Pancreas (tissue), 10 donors: ENCODE measurements at regions of chr11 and their contacts with region 1.

Region 1: DNA sequence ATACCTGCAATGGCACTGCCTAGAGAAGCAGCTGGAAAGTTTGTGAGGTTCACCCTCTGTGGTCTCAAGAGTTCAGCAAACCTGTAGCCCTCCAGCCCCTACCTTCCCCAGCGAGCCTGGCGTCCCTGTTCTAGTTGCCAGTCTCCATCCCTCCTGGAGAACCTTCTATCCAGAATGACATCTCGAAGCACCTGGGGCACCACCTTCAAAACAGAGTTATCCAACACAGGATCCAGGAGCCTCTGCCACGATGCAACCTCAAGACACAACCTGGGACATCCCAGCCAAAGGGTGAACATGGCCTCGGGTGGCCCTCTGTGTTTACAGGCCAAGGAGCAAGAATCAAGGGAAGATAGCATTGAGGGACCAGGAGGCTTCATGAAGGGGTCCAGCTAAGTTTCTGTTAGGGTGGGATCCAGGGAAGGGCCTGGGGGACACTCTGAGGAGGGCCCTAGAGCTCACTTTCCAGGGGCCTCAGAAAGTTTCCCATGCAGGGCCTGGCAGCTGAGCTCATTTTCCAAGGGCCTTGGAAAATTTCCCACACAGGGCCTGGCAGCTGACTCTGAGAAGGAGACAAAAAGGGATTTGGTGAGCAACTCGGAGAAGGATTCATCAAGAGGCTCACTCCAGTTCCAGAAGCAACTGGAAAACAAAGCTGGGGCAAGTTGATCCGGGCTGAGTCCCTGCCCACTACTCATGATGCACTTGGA is 36.9 kb upstream of the SYT13 start:
- DNase-seq: no peak
- ATAC-seq: no peak
- H3K4me3 ChIP-seq: no peak overlapping the region
- H3K27ac ChIP-seq: no peak overlapping the region
- H3K4me1 ChIP-seq: no peaks in the 10 kb centered on the region
- H3K27me3 ChIP-seq: no peaks in the 10 kb centered on the region
- CTCF ChIP-seq: no peak

Region 2: GRCh38 chr11:44977476-44977984 is 345.5 kb before region 1 on chr11:
- intact Hi-C with region 1: no loop called
- DNase-seq: no peak
- ATAC-seq: no peak
- H3K4me3 ChIP-seq: no peak overlapping the region
- H3K27ac ChIP-seq: peak overlapping the region in 1 of 4 donors; percentile 18
- H3K4me1 ChIP-seq: peaks cover 38 to 49% (median 44%) of the 10 kb centered on the region in 3 donors
- H3K27me3 ChIP-seq: no peaks in the 10 kb centered on the region
- CTCF ChIP-seq: no peak

Region 3: DNA sequence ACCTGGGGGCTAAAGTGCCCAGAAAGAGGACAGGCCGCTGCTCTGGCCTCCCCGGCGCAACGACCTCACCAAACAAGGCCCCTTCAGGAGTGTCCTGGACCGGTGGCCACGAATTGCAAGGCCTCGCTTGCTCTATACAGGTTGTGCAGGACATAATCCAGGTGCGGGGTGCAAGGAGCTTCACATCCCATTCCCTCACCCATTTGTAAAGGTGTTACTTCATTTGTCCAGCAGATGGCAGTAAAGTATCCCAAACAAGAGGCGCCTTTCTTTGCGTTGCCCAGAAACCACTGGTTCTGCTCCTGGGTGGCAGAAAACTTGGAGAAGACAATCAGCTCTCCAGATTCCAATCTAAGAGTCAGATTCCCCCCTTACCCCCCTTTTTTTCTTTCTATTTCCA is 212.5 kb before region 1 on chr11:
- intact Hi-C with region 1: loop called in 1 of 3 experiments (anchors 10 kb)
- DNase-seq: peak in 1 of 6 donors; percentile 61
- ATAC-seq: peak; percentile 78 to 97 (median 90)
- H3K4me3 ChIP-seq: no peak overlapping the region
- H3K27ac ChIP-seq: no peak overlapping the region
- H3K4me1 ChIP-seq: no peaks in the 10 kb centered on the region
- H3K27me3 ChIP-seq: peaks cover 0 to 3% (median 0%) of the 10 kb centered on the region in 4 donors
- CTCF ChIP-seq: peak; percentile 55 to 76 (median 70)

Region 4: GRCh38 chr11:45374653-45375059 is 51.6 kb after region 1 on chr11:
- intact Hi-C with region 1: no loop called
- DNase-seq: no peak
- ATAC-seq: no peak
- H3K4me3 ChIP-seq: no peak overlapping the region
- H3K27ac ChIP-seq: no peak overlapping the region
- H3K4me1 ChIP-seq: no peaks in the 10 kb centered on the region
- H3K27me3 ChIP-seq: no peaks in the 10 kb centered on the region
- CTCF ChIP-seq: no peak